H1 (cell line): ENCODE measurements at regions of chr3 and their contacts with region 1.

Region 1: GRCh38 chr3:66038726-66039589 is at the start of gene MAGI1:
- DNase-seq: peak; percentile 91 to 94
- H3K4me3 ChIP-seq: peak within 1 kb of the TSS; percentile 76 to 93 (median 84)
- H3K27ac ChIP-seq: peak within 1 kb of the TSS; percentile 60; the same call in 1 of the 2 replicates
- H3K4me1 ChIP-seq: peaks cover 12 to 24% (median 16%) of the 10 kb centered on the region in 4 experiments
- H3K27me3 ChIP-seq: no peaks in the 10 kb centered on the region
- CTCF ChIP-seq: no peak; a peak in 1 of 4 replicates
- EP300 ChIP-seq: no peak
- POLR2A ChIP-seq: peak; percentile 47 to 60; a peak in 2 of 3 replicates
- RAD21 ChIP-seq: no peak
- total RNA-seq, gene MAGI1: 77.9 and 78.0 TPM in 2 replicates

Region 2: DNA sequence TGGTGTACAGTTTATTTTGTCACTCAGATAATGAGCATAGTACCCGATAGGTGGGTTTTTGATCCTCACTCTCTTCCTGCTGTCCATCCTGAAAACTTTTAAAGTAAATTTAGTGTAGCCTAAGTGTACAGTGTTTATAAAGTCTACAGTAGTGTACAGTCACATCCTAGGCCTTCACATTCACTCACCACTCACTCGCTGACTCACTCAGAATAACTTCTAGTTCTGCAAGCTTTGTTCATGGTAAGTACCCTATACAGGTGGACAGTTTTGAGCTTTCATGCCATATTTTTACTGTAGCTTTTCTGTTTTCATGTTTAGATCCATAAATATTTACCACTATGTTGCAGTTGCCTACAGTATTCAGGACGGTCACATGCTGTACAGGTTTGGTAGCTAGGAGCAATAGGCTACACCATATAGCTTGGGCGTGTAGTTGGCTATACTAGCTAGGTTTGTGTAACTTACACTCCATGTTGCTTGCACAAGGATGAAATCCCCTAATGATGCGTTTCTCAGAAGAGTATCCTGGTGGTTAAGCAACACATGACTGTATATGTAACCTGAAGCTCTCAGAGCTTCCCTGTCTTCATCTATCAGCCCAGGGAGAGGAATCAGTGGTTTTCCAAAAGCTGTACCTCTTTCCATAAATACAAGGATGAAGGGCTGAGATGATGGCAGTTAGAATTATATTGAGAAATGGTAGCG is 94.2 kb after region 1 on chr3:
- CTCF ChIA-PET with region 1: interaction called, 16 read pairs
- POLR2A ChIA-PET with region 1: interaction called, 5 read pairs
- DNase-seq: no peak
- H3K4me3 ChIP-seq: no peak overlapping the region
- H3K27ac ChIP-seq: no peak overlapping the region
- H3K4me1 ChIP-seq: peaks cover 0 to 4% (median 2%) of the 10 kb centered on the region in 4 experiments; a peak in 3 of 7 replicates
- H3K27me3 ChIP-seq: no peaks in the 10 kb centered on the region
- CTCF ChIP-seq: no peak
- EP300 ChIP-seq: no peak
- POLR2A ChIP-seq: no peak
- RAD21 ChIP-seq: no peak

Region 3: GRCh38 chr3:66138336-66139313 is 99.7 kb after region 1 on chr3:
- CTCF ChIA-PET with region 1: interaction called, 16 read pairs
- POLR2A ChIA-PET with region 1: interaction called, 5 read pairs
- DNase-seq: peak; percentile 34 to 67
- H3K4me3 ChIP-seq: no peak overlapping the region
- H3K27ac ChIP-seq: no peak overlapping the region
- H3K4me1 ChIP-seq: peaks cover 0 to 4% (median 0%) of the 10 kb centered on the region in 4 experiments; a peak in 2 of 7 replicates
- H3K27me3 ChIP-seq: no peaks in the 10 kb centered on the region
- CTCF ChIP-seq: peak; percentile 56 to 89 (median 85)
- EP300 ChIP-seq: no peak
- POLR2A ChIP-seq: no peak
- RAD21 ChIP-seq: peak; percentile 98